T-cell (primary cell): ENCODE measurements at regions of chr2 and their contacts with region 1.

Region 1: GRCh38 chr2:204909791-204910190 is 364.5 kb downstream of the PARD3B start:
- DNase-seq: no peak
- ATAC-seq: no peak
- H3K4me3 ChIP-seq: no peak overlapping the region
- H3K4me3 Mint-ChIP-seq: no peak overlapping the region
- H3K27ac ChIP-seq: no peak overlapping the region
- H3K27ac Mint-ChIP-seq: no peak overlapping the region
- H3K4me1 ChIP-seq: no peaks in the 10 kb centered on the region
- H3K4me1 Mint-ChIP-seq: peaks cover 0 to 13% (median 7%) of the 10 kb centered on the region in 3 donors
- H3K27me3 ChIP-seq: no peaks in the 10 kb centered on the region
- H3K27me3 Mint-ChIP-seq: no peaks in the 10 kb centered on the region

Region 2: GRCh38 chr2:203396667-203397066 is 1513.1 kb before region 1 on chr2:
- CTCF ChIA-PET with region 1: no interaction called
- POLR2A ChIA-PET with region 1: no interaction called
- DNase-seq: no peak
- ATAC-seq: no peak
- H3K4me3 ChIP-seq: no peak overlapping the region
- H3K4me3 Mint-ChIP-seq: no peak overlapping the region
- H3K27ac ChIP-seq: no peak overlapping the region
- H3K27ac Mint-ChIP-seq: no peak overlapping the region
- H3K4me1 ChIP-seq: no peaks in the 10 kb centered on the region
- H3K4me1 Mint-ChIP-seq: no peaks in the 10 kb centered on the region
- H3K27me3 ChIP-seq: no peaks in the 10 kb centered on the region
- H3K27me3 Mint-ChIP-seq: no peaks in the 10 kb centered on the region

Region 3: DNA sequence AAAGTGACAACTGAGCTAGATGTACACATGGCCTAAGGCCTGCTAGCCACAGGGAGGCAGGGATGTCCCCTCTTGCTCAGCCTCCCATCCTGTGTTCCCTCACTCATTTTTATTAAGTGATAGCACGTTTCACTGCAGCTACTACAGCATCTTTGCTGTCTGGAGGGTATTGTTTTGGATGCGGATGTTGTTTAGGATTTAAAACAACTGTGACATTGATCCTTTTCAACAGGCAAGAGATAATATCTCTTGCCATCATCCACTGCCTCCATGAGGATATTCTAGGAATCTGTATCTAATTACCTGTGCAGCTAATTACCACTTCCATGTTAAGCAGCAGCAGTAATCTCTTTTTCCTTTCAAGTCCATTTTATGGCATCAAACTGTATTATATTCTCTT is 19.1 kb before region 1 on chr2:
- CTCF ChIA-PET with region 1: no interaction called
- POLR2A ChIA-PET with region 1: interaction called, 3 to 10 read pairs
- DNase-seq: no peak
- ATAC-seq: no peak
- H3K4me3 ChIP-seq: no peak overlapping the region
- H3K4me3 Mint-ChIP-seq: no peak overlapping the region
- H3K27ac ChIP-seq: no peak overlapping the region
- H3K27ac Mint-ChIP-seq: no peak overlapping the region
- H3K4me1 ChIP-seq: peaks cover 0 to 11% of the 10 kb centered on the region in 2 experiments
- H3K4me1 Mint-ChIP-seq: peaks cover 7 to 8% (median 8%) of the 10 kb centered on the region in 3 donors
- H3K27me3 ChIP-seq: no peaks in the 10 kb centered on the region
- H3K27me3 Mint-ChIP-seq: no peaks in the 10 kb centered on the region

Region 4: DNA sequence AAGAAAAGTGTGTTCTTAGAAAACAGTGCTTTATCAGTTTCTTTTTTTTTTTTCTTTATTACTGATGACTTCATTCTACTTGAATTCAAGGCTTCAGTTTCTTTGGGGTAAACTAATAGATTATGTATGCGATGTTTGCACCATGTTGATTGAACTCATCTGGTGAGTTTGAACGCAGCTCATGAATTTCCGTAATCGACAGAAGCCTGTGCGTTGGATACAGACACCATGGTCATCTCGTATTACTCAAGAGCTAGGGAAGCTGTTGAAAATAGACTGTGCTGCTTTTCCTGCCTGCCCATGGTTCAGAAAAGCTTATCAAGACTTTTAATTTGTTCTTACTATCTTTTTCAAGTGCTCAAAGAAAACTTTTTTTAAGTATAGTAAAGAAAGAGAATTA is 587.0 kb after region 1 on chr2:
- CTCF ChIA-PET with region 1: no interaction called
- POLR2A ChIA-PET with region 1: interaction called in 1 of 2 experiments, 11 read pairs
- DNase-seq: no peak
- ATAC-seq: no peak
- H3K4me3 ChIP-seq: no peak overlapping the region
- H3K4me3 Mint-ChIP-seq: no peak overlapping the region
- H3K27ac ChIP-seq: no peak overlapping the region
- H3K27ac Mint-ChIP-seq: no peak overlapping the region
- H3K4me1 ChIP-seq: no peaks in the 10 kb centered on the region
- H3K4me1 Mint-ChIP-seq: peaks cover 0 to 2% (median 0%) of the 10 kb centered on the region in 3 donors
- H3K27me3 ChIP-seq: no peaks in the 10 kb centered on the region
- H3K27me3 Mint-ChIP-seq: peaks cover 0 to 10% of the 10 kb centered on the region in 2 donors